Breast epithelium (tissue), 4 donors: ENCODE measurements at regions of chr16 and their contacts with region 1.

Region 1: DNA sequence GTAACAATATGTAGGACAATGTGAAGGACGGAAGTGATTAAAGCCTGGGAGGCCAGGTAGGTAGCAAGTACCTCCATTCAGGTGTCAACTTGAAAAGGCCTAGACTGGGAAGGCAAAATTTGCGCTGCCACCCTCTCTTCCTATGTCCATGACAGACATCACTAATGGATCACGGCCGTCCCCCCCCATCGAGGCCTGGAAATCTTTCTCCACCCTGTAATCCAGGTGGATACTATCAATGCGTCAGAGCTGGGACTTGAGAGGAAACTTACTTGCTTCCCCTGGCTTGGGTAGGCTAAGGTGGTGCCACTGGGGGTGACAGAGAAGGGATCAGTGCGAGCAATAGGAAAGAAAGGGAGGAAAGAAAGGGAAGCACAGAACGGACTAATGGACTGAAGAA is 156.1 kb downstream of the SALL1 start:
- DNase-seq: no peak
- H3K4me3 ChIP-seq: no peak overlapping the region
- H3K27ac ChIP-seq: no peak overlapping the region
- H3K4me1 ChIP-seq: no peaks in the 10 kb centered on the region
- H3K27me3 ChIP-seq: peaks cover 0 to 3% of the 10 kb centered on the region in 2 donors
- CTCF ChIP-seq: no peak
- POLR2A ChIP-seq: no peak

Region 2: GRCh38 chr16:51024703-51025102 is 29.7 kb after region 1 on chr16:
- intact Hi-C with region 1: no loop called
- DNase-seq: no peak
- H3K4me3 ChIP-seq: no peak overlapping the region
- H3K27ac ChIP-seq: no peak overlapping the region
- H3K4me1 ChIP-seq: no peaks in the 10 kb centered on the region
- H3K27me3 ChIP-seq: no peaks in the 10 kb centered on the region
- CTCF ChIP-seq: no peak
- POLR2A ChIP-seq: no peak

Region 3: GRCh38 chr16:51048544-51048943 is 53.5 kb after region 1 on chr16:
- intact Hi-C with region 1: loop called (anchors 2 kb)
- DNase-seq: no peak
- H3K4me3 ChIP-seq: no peak overlapping the region
- H3K27ac ChIP-seq: no peak overlapping the region
- H3K4me1 ChIP-seq: no peaks in the 10 kb centered on the region
- H3K27me3 ChIP-seq: no peaks in the 10 kb centered on the region
- CTCF ChIP-seq: no peak
- POLR2A ChIP-seq: no peak

Region 4: DNA sequence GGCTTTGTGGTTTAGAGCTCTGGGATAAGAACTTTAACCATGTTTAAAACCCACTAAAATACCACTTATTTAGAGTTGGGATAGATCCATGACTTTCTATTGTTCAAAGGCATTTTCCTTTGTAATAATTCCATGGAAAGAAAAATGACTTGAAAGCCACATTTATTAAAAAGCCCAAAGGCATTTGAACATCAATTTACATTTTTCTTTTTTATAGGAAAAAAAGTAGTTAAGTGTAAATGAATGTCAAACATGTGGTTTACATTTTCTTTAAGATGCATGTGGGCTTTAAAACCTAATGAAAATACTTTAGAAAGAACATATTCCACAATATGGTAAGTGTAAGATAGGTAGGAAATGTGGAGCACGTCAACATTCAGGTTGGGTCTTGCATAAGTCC is 1108.8 kb after region 1 on chr16:
- intact Hi-C with region 1: no loop called
- DNase-seq: no peak
- H3K4me3 ChIP-seq: no peak overlapping the region
- H3K27ac ChIP-seq: no peak overlapping the region
- H3K4me1 ChIP-seq: no peaks in the 10 kb centered on the region
- H3K27me3 ChIP-seq: no peaks in the 10 kb centered on the region
- CTCF ChIP-seq: no peak
- POLR2A ChIP-seq: no peak